PC-9 (cell line): ENCODE measurements at regions of chr5 and their contacts with region 1.

Region 1: GRCh38 chr5:116137544-116138378 is 52.9 kb downstream of the COMMD10 start:
- DNase-seq: peak in 1 of 2 experiments; percentile 43
- H3K4me3 ChIP-seq: no peak overlapping the region
- H3K27ac ChIP-seq: no peak overlapping the region
- H3K4me1 ChIP-seq: no peaks in the 10 kb centered on the region
- H3K27me3 ChIP-seq: no peaks in the 10 kb centered on the region
- CTCF ChIP-seq: peak; percentile 88

Region 2: GRCh38 chr5:115398719-115399118 is 739.0 kb before region 1 on chr5:
- CTCF ChIA-PET with region 1: no interaction called
- POLR2A ChIA-PET with region 1: no interaction called
- intact Hi-C with region 1: no loop called
- DNase-seq: peak in 1 of 2 experiments; percentile 59
- H3K4me3 ChIP-seq: no peak overlapping the region
- H3K27ac ChIP-seq: no peak overlapping the region
- H3K4me1 ChIP-seq: no peaks in the 10 kb centered on the region
- H3K27me3 ChIP-seq: no peaks in the 10 kb centered on the region
- CTCF ChIP-seq: no peak

Region 3: DNA sequence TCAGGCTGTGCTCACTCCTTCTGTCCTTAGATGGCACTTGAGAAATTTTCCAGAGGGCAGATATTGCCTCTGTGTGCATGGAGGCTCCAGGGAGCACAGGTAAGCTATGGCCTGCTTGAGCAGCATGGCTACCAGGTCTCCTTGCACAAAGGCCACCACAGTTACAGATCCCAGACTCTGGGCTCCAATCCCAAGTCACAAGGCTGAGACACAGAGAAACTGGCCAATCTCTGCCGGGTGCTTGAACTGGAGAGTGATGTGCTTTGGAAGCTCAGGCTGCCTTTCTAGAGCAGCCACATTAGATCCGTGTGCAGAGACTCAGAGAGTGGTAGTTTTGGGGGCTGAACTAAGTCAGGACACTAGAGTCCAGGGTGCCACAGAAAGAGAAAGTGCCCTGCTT is 291.2 kb after region 1 on chr5:
- CTCF ChIA-PET with region 1: no interaction called
- POLR2A ChIA-PET with region 1: no interaction called
- intact Hi-C with region 1: loop called (anchors 5 kb)
- DNase-seq: no peak
- H3K4me3 ChIP-seq: no peak overlapping the region
- H3K27ac ChIP-seq: no peak overlapping the region
- H3K4me1 ChIP-seq: no peaks in the 10 kb centered on the region
- H3K27me3 ChIP-seq: no peaks in the 10 kb centered on the region
- CTCF ChIP-seq: no peak

Region 4: DNA sequence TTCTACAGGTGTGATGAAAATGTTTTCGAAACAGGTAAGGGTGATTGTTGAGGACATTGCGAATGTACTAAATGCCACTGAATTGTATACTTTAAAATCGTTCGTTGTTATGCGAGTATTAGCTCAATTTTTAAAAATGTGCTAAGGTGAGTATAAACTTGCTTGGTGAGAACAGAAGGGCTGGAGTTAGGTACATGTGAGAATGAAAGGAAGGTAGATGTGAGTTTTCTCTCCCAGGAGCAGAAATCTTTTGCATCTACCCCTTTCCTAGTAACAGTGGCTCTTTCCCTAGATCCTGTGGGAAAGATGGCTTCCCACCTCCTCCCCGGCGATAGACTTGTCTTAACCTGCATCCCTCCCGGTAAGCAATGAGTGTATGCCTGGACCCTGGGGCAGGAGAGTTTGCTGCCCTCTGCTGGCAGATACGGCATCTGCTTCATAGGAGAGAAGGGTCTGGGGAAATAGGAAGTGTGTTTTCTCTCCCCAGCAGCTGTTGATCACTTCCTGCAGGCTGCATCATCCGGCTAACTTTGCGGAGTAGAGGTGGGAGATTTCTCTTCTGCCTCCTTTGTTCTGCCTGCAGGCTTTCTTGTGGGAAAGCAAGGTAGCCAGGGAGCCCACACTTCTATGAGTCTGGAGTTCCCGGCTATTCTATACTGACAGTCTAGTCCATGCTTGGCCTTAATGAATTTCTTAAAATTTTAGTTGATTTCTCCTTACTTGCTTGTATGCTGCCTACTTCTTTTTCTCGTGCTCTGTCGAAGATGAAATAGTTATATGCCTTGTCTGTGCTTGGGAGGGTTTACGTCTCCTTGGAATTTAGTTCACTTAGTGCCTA is 810.1 kb after region 1 on chr5:
- CTCF ChIA-PET with region 1: no interaction called
- POLR2A ChIA-PET with region 1: no interaction called
- intact Hi-C with region 1: loop called (anchors 5 kb)
- DNase-seq: peak in 1 of 2 experiments; percentile 41
- H3K4me3 ChIP-seq: no peak overlapping the region
- H3K27ac ChIP-seq: no peak overlapping the region
- H3K4me1 ChIP-seq: no peaks in the 10 kb centered on the region
- H3K27me3 ChIP-seq: peaks cover 6% of the 10 kb centered on the region; the same call in 1 of the 2 replicates
- CTCF ChIP-seq: peak; percentile 77